Esophagus muscularis mucosa (tissue), 4 donors: ENCODE measurements at regions of chr3 and their contacts with region 1.

Region 1: DNA sequence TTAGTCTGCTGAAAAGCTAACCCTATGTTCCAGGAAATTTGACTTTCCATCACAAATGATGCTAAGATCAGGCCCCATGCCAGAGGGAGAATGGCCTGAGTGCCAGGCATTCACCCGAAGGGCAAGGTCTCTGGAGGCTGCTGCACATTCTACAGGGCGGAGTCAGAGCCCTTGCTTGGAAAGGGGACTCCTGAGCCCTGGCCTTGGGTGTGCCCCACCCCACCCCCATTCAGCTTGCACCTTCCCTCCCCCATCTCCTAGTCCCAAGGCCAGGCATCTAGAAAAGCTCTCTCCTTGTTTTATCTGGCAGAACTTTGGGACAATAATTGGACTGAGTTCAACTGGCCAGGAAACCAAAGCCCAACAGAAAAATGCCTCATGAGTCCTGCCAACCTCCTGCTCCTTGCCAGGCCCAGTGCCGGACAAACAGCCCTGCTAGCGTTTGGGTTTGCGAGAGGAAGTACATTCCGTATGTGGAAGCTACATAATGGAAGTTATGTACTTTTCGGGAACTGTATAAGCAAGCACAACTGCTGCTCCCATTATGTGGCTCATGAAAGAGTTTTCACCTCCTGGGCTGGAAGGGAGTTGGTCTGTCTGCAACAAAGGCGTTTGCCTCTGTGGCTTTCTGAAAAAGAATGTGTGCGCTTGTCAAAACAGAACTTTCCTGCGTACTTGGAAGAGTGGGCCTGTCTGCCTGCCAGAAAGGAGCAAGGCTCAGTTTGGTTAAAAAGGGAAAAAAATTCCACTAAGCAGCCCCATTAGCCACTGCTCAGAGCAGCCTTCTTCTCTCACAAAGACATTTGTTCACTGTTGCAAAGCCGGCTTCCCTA is 321.5 kb upstream of the CTNNB1 start:
- DNase-seq: no peak
- H3K4me3 ChIP-seq: peak overlapping the region in 3 of 4 donors; percentile 2 to 35 (median 18)
- H3K27ac ChIP-seq: peak overlapping the region; percentile 72 to 86 (median 80)
- H3K4me1 ChIP-seq: peaks cover 34 to 48% (median 43%) of the 10 kb centered on the region in 4 donors
- H3K27me3 ChIP-seq: no peaks in the 10 kb centered on the region
- CTCF ChIP-seq: no peak
- EP300 ChIP-seq: peak; percentile 48
- POLR2A ChIP-seq: no peak

Region 2: GRCh38 chr3:40920041-40920440 is 42.2 kb after region 1 on chr3:
- intact Hi-C with region 1: no loop called
- DNase-seq: no peak
- H3K4me3 ChIP-seq: no peak overlapping the region
- H3K27ac ChIP-seq: no peak overlapping the region
- H3K4me1 ChIP-seq: no peaks in the 10 kb centered on the region
- H3K27me3 ChIP-seq: no peaks in the 10 kb centered on the region
- CTCF ChIP-seq: no peak
- EP300 ChIP-seq: no peak
- POLR2A ChIP-seq: no peak

Region 3: DNA sequence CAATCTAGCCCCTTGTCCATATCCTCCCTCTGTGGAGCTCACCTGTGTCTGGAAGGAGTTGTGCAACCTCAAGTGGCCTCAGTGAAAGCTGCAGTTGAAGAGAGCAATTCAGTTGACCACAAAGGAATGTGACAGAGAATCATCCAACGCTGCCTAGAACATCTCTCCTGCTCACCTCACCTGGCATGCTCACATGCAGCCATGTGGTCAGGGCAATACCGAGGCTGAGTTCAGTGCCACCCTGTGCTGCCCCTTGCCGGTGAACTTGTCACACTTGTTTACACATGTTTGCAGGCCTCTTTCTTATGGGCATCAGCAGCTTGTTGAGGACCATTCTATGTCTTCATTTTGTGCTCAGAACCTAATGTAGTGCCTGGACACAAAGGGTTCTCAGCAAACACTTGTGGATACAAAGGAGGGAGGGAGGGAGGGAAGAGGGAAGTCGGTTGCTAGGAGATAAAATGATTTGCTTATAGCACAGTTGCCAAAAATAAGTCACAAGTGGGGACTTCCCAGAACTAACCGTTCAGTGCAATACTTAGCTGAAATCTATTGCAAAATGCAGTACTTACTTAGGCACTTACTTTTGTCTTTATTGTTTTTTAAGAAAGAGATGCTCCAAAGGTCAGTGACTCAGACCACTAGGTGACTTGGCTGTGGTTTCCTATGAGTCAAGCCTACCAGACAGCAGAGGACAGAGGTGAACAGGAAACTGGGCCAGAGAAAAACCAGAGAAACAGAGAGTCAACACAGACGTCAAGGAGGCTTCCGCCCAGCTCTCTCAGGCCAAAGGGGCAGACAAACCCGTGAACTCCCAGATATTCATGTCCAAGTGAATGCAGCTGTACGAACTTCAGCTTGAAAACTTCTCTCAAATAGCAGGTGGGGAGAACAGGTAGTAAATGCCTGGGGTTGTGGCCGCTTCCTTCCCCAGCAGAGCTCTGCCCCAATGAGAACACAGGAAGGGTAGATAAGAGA is 93.6 kb after region 1 on chr3:
- intact Hi-C with region 1: loop called (anchors 2 kb)
- DNase-seq: no peak
- H3K4me3 ChIP-seq: no peak overlapping the region
- H3K27ac ChIP-seq: peak overlapping the region; percentile 65 to 82 (median 74)
- H3K4me1 ChIP-seq: peaks cover 61 to 66% (median 65%) of the 10 kb centered on the region in 4 donors
- H3K27me3 ChIP-seq: no peaks in the 10 kb centered on the region
- CTCF ChIP-seq: no peak
- EP300 ChIP-seq: peak; percentile 78
- POLR2A ChIP-seq: no peak